Activated naive CD4-positive, alpha-beta T cell treated with anti-CD3 and anti-CD28 coated beads, Interleukin-2, amount 10 ng/mL, durations not matched to agents 7 days and 5 days (primary cell): ENCODE measurements at regions of chr2 and their contacts with region 1.

Region 1: DNA sequence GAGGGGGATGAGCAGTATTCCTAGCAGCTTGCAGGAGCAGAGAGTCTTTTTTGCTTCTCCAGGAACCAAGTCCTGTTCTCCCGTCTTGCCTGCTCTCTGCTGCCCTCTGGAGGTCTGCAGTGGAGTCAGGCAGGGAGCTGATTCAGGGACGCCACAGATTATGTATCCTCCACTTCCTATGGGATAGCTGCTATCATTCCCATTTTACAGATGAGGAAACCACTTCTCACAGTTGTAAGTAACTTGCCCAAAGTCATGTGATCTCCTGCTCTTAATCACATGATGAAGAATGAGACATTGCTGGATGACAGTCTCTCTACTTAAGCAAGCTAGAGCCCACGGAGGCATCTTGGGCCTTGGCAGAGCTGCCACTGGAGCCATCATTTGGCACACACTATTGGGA is 8.3 kb downstream of the SLC4A5 start:
- DNase-seq: peak; percentile 83
- H3K4me3 Mint-ChIP-seq: no peak overlapping the region
- H3K27ac Mint-ChIP-seq: no peak overlapping the region
- H3K4me1 Mint-ChIP-seq: peaks cover 11% of the 10 kb centered on the region
- H3K27me3 Mint-ChIP-seq: no peaks in the 10 kb centered on the region

Region 2: DNA sequence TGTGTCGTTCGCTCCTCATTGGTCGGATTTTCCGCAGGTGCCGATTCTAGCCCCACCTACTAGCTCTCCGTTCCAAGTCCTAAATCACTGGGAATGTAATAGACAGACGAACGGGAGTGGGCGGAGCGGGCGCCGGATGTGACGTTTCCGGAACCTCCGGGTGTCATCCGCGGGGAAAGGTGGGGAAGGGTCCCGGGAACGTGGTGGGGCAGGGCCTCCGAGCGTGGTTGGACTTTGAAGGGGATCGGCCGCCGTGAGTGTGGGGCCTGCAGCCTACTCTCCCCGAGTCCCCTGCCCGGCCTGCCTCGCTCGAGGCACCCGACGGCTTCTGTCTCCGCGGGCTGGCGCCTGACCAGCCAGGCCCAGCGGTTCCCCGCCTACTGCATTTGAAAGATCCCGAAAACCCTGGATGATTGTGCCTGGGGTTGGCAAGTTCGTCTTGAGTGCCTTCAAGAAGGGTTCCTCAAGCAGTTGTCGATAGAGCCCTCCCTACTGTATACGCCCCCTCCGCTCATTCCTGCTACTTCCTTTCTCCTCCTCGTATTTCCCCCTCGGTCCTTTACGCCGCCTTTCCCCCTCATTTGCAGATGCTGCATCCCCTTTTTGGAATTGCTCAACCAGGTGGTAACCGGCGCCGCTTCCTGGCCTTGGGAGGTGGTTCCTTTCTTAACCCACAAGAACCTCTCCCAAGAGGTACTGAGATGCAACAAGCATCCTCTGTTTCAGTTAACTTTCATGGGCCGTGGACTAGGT is 505.9 kb before region 1 on chr2 and contains the start of gene STAMBP:
- CTCF ChIA-PET with region 1: interaction called, 27 read pairs
- DNase-seq: peak; percentile 97
- H3K4me3 Mint-ChIP-seq: peak within 1 kb of the TSS; percentile 91
- H3K27ac Mint-ChIP-seq: peak within 1 kb of the TSS; percentile 94
- H3K4me1 Mint-ChIP-seq: peaks cover 40% of the 10 kb centered on the region
- H3K27me3 Mint-ChIP-seq: peaks cover 4% of the 10 kb centered on the region

Region 3: GRCh38 chr2:74261204-74261864 is 73.6 kb before region 1 on chr2:
- CTCF ChIA-PET with region 1: interaction called, 23 read pairs
- DNase-seq: no peak
- H3K4me3 Mint-ChIP-seq: no peak overlapping the region
- H3K27ac Mint-ChIP-seq: no peak overlapping the region
- H3K4me1 Mint-ChIP-seq: peaks cover 20% of the 10 kb centered on the region
- H3K27me3 Mint-ChIP-seq: peaks cover 4% of the 10 kb centered on the region

Region 4: GRCh38 chr2:74290466-74291217 is 44.3 kb before region 1 on chr2:
- CTCF ChIA-PET with region 1: interaction called, 19 read pairs
- DNase-seq: peak; percentile 70
- H3K4me3 Mint-ChIP-seq: peak overlapping the region; percentile 46
- H3K27ac Mint-ChIP-seq: peak overlapping the region; percentile 91
- H3K4me1 Mint-ChIP-seq: peaks cover 21% of the 10 kb centered on the region
- H3K27me3 Mint-ChIP-seq: peaks cover 4% of the 10 kb centered on the region

Region 5: GRCh38 chr2:74357627-74358026 is 22.7 kb after region 1 on chr2:
- CTCF ChIA-PET with region 1: interaction called, 23 read pairs
- DNase-seq: no peak
- H3K4me3 Mint-ChIP-seq: no peak overlapping the region
- H3K27ac Mint-ChIP-seq: no peak overlapping the region
- H3K4me1 Mint-ChIP-seq: no peaks in the 10 kb centered on the region
- H3K27me3 Mint-ChIP-seq: no peaks in the 10 kb centered on the region

Region 6: DNA sequence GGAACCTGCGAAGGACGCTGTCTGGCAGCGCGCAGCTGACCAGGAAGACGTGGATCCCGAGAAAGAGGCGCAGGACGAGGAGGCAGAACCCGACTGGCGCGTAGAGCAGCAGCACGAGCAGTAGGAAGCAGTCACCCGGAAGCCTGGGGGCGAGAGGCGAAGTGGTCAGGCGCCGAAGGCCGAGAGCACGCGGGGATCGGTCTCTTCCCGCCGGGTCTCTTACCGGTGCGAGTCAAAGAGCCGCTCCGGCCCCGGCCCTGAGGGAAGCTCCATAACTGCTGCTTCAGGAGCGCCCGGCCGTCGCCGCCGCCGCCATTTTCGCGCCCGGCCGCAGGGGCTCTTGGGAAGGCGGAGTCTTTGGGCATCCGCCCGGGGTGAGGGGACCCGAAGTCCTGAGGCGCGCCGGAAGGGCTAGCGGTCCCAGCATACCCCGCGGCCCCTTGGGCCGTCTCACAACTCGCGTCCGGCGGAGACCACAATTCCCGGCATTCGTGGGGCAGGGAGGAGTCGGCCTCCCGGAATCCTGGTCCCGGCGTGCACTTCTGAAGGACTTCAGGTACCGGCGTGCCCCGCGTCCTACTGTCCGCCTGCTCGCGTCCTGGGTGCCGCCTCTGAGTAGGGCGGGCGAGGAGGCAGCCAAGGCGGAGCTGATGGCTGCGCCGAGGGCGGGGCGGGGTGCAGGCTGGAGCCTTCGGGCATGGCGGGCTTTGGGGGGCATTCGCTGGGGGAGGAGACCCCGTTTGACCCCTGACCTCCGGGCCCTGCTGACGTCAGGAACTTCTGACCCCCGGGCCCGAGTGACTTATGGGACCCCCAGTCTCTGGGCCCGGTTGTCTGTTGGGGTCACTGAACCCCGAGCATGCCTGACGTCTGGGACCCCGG is 194.7 kb after region 1 on chr2 and contains the starts of genes AUP1 and HTRA2:
- CTCF ChIA-PET with region 1: interaction called, 11 read pairs
- DNase-seq: peak; percentile 94
- H3K4me3 Mint-ChIP-seq: peak within 1 kb of the TSS; percentile 96
- H3K27ac Mint-ChIP-seq: peak within 1 kb of the TSS; percentile 94
- H3K4me1 Mint-ChIP-seq: peaks cover 51% of the 10 kb centered on the region
- H3K27me3 Mint-ChIP-seq: no peaks in the 10 kb centered on the region

Region 7: DNA sequence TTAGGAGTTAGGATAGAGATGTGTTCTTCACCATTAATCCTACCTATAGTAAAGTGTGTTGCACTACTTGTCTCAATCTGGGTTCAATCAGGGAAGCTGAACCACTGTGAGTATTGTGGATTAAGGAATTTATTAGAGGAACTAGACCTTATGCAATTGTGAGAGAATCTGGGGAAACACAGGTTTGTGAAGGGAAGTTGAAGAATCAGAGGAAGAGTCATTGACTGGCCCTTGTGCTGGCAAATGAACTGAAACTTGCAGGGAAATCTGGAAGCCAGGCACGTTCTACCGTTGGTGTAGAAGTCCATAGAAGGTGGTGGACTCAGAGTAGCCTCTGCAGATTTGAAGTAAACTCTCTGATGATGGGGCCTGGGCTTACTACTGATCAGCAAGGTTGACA is 454.3 kb after region 1 on chr2:
- CTCF ChIA-PET with region 1: no interaction called
- DNase-seq: no peak
- H3K4me3 Mint-ChIP-seq: no peak overlapping the region
- H3K27ac Mint-ChIP-seq: no peak overlapping the region
- H3K4me1 Mint-ChIP-seq: no peaks in the 10 kb centered on the region
- H3K27me3 Mint-ChIP-seq: peaks cover 4% of the 10 kb centered on the region